Dorsolateral prefrontal cortex (tissue), 120 donors: ENCODE measurements at regions of chr15 and their contacts with region 1.

Region 1: DNA sequence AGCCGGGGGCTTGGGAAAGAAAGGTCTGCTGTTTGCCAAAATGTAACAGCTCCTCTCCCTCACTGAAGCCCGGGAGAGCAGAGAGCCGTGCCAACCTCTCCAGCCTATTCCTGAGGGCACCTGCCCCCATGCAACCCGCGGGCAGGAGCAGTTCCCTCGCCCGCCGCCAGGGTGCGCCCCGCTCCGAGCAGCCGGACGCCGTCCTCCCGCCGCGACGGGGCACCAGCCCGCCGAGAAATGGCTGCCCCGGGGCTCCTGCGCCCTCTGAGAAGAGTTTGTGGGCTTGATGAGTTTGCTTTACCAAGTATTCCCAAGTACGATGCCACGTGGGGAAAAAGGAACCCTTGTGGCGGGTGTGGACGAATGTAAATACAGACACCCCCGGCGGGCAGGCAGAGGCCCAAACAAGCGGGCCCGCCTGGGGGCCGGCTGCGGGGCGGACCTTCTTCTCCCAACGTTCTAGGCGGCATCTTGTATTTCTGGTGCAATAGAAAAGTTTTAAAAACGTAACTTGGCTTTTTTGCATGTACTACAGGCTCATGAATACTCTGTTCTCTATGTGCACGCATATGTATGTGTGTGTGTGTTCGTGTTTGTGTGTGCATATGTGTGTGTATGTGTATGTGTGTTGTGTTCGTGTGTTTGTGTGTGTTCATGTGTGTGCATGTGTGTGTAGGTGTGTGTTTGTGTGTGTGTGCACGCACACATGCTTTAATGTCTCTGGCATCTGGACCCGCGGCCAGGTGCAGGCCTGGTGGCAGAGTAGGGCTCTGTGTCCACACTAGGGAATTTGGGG is 162.9 kb downstream of the CHSY1 start:
- DNase-seq: peak in 8 of 10 donors; percentile 33 to 78 (median 62)
- H3K4me3 ChIP-seq: peak overlapping the region in 25 of 59 donors; percentile 9 to 53 (median 30)
- H3K27ac ChIP-seq: peak overlapping the region in 10 of 59 donors; percentile 1 to 83 (median 38)
- H3K27me3 ChIP-seq: no peaks in the 10 kb centered on the region
- CTCF ChIP-seq: peak; percentile 74 to 100 (median 97)

Region 2: DNA sequence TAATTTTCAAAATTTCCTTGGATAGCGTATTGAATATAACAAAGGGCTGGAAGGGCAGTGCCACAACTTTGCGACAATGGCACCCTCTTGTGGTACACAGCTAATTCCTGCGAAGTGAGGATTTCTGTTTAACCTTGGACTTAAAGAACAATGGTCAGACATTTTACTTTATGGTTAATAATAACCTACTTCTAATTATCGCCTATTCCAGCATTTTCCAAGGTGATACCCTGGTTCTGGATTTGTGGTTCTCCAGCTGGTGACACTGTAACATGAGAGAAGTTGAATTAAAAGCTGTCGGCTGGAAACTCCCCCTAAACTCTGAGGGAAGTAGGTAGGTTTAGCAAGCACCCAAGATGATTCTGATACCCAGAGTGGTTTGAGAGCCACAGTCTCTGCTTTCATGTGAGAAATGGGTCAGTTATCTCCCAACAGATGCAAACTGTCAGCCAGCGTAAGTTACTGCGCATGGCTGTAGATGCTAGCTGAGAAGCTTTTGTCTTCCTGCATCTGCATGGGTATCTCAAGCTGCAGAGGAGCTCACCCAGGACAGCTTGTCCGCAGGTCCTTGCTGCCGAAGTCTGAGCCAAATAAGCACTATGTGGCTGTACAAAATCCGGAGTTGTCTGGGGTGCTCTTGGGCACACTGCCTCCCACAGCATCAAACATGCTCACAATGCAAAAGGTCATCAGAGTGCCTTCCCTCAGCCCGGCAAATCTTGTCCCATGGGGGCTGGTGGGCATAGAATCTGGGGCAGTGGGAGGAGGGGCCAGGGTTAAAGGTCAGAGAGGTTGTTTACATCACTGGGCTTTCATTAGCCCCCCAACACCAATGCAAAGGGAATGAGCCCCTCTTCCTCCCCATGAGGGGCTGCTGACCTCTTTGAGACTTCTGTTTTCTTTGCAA is 169.5 kb after region 1 on chr15:
- intact Hi-C with region 1: loop called (anchors 2 to 5 kb)
- DNase-seq: peak in 7 of 10 donors; percentile 61 to 78 (median 64)
- H3K4me3 ChIP-seq: peak overlapping the region in 2 of 59 donors; percentile 7 to 8
- H3K27ac ChIP-seq: peak overlapping the region in 2 of 59 donors; percentile 35 to 50
- H3K27me3 ChIP-seq: no peaks in the 10 kb centered on the region
- CTCF ChIP-seq: peak; percentile 73 to 97 (median 89)